H1 (cell line): ENCODE measurements at regions of chr12 and their contacts with region 1.

Region 1: DNA sequence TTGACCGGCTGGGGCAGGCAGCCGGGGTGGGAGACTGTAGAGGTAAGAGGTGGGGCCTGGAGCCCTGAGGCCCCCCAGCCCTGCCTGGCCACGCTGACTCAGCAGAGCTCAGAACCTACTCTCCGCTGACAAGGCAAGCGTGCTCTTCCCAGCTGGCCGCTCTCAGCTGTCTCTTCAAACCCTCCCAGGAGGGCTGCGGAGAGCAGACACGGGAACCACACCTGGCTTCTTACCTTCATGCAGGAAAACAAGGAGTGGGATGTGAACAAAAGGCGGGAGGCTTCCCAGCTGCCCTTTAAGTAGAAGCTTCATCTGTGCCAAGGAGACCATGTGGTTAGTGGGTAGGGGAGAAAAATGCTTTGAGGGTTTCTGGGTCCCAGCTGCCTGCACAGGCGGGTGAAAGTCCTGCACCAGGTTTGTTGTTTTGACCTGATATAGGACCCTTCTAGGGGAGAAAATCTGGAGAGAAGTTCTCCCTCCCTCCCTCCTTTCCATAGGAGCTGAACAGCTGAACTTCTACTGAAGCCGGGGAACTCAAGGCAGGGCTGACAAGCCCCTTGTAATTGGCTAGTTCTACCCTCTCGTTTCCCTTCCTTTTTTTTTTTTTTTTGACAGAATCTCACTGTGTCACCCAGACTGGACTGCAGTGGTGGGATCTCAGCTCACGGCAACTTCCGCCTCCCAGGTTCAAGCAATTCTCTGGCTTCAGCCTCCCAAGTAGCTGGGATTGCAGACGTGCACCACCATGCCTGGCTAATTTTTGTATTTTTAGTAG is 12.8 kb upstream of the TESC start:
- DNase-seq: no peak
- H3K4me3 ChIP-seq: no peak overlapping the region
- H3K27ac ChIP-seq: no peak overlapping the region
- H3K4me1 ChIP-seq: peaks cover 0 to 9% (median 7%) of the 10 kb centered on the region in 4 experiments; a peak in 6 of 7 replicates
- H3K27me3 ChIP-seq: peaks cover 0 to 3% (median 0%) of the 10 kb centered on the region in 4 experiments; a peak in 1 of 7 replicates
- CTCF ChIP-seq: no peak
- EP300 ChIP-seq: no peak
- POLR2A ChIP-seq: no peak
- RAD21 ChIP-seq: no peak; a peak in 1 of 4 replicates

Region 2: GRCh38 chr12:117032593-117033381 is 79.2 kb before region 1 on chr12:
- CTCF ChIA-PET with region 1: interaction called, 14 read pairs
- POLR2A ChIA-PET with region 1: interaction called, 4 read pairs
- DNase-seq: no peak
- H3K4me3 ChIP-seq: no peak overlapping the region
- H3K27ac ChIP-seq: no peak overlapping the region
- H3K4me1 ChIP-seq: peaks cover 0 to 10% (median 3%) of the 10 kb centered on the region in 4 experiments; a peak in 4 of 7 replicates
- H3K27me3 ChIP-seq: no peaks in the 10 kb centered on the region
- CTCF ChIP-seq: no peak
- EP300 ChIP-seq: no peak
- POLR2A ChIP-seq: no peak
- RAD21 ChIP-seq: no peak

Region 3: GRCh38 chr12:117098361-117099217 is 13.4 kb before region 1 on chr12:
- CTCF ChIA-PET with region 1: interaction called, 14 read pairs
- POLR2A ChIA-PET with region 1: interaction called, 8 read pairs
- DNase-seq: peak in 1 of 2 experiments; percentile 62
- H3K4me3 ChIP-seq: peak overlapping the region; percentile 65 to 95 (median 68)
- H3K27ac ChIP-seq: no peak overlapping the region
- H3K4me1 ChIP-seq: peaks cover 0 to 5% (median 1%) of the 10 kb centered on the region in 4 experiments; a peak in 3 of 7 replicates
- H3K27me3 ChIP-seq: peaks cover 5 to 15% (median 10%) of the 10 kb centered on the region in 4 experiments
- CTCF ChIP-seq: no peak
- EP300 ChIP-seq: no peak
- POLR2A ChIP-seq: no peak
- RAD21 ChIP-seq: no peak